PC-3 (cell line): ENCODE measurements at regions of chr2 and their contacts with region 1.

Region 1: DNA sequence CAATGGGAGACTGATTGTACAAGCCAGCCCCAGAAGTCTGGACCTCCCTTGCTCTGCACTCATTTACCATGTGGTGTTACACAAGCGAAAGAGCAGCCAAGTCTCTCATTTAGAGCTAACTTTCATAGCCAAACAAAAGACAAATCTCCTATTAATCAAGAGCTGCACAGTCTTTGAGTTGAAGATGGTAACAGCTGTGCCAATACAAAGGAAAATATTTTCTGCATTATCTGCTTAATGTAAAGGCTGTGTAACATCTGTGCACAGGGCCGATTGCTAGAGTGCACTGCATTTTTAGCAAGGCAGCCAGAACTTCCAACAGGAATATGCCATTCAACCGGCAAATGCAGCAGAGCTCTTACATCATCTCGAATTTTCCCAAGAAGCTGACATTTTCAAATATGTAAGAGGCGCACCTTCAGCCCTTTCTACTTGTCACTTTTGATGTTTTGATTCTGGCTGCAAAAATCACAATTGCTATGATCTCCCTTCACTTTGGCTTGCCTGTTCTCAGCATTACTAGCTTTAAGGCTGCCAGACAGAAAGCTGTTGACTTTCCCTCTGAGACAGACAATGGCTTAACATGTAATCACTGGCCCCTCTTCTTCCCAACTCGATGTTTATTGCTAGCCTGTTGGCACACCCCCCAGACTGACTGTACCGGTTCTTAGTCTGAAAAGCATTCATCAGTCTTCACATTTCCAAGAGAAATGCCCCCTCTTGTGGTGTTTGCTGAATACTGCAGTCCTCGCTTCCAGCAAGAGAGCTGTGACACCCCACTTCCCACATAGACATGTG is 96.9 kb upstream of the TANK start:
- DNase-seq: peak; percentile 93
- ATAC-seq: peak; percentile 86
- H3K4me3 ChIP-seq: no peak overlapping the region
- H3K27ac ChIP-seq: no peak overlapping the region
- H3K4me1 ChIP-seq: peaks cover 3% of the 10 kb centered on the region; the same call in 1 of the 2 replicates
- H3K27me3 ChIP-seq: no peaks in the 10 kb centered on the region
- CTCF ChIP-seq: peak; percentile 96

Region 2: GRCh38 chr2:160252278-160252887 is 811.0 kb before region 1 on chr2:
- CTCF ChIA-PET with region 1: interaction called, 4 read pairs
- POLR2A ChIA-PET with region 1: no interaction called
- intact Hi-C with region 1: loop called (anchors 10 kb)
- DNase-seq: peak; percentile 75
- ATAC-seq: peak; percentile 37; the same call in 1 of the 2 replicates
- H3K4me3 ChIP-seq: no peak overlapping the region
- H3K27ac ChIP-seq: no peak overlapping the region
- H3K4me1 ChIP-seq: peaks cover 17% of the 10 kb centered on the region
- H3K27me3 ChIP-seq: no peaks in the 10 kb centered on the region
- CTCF ChIP-seq: peak; percentile 82

Region 3: GRCh38 chr2:160719116-160719515 is 344.2 kb before region 1 on chr2:
- CTCF ChIA-PET with region 1: no interaction called
- POLR2A ChIA-PET with region 1: no interaction called
- intact Hi-C with region 1: no loop called
- DNase-seq: peak; percentile 83
- ATAC-seq: peak; percentile 93
- H3K4me3 ChIP-seq: no peak overlapping the region
- H3K27ac ChIP-seq: peak overlapping the region; percentile 9
- H3K4me1 ChIP-seq: peaks cover 21% of the 10 kb centered on the region
- H3K27me3 ChIP-seq: no peaks in the 10 kb centered on the region
- CTCF ChIP-seq: no peak

Region 4: DNA sequence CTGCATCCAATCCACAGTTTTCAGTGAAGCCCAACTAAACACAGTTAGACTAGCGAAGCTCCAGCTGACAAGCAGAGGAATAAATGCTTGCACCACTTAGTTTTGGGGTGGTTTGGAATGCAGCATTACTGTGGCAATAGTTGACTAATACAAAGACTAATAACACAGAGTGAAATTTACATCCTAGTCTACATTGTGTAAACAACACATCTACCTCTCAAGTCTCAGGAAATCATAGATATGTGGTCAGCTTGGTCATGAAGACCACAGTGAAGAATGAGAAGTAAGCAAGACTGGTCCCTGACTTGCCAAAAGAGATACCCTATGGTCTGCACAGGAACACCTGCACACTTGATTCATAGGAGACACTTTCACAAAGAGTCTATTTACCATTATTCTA is 58.2 kb before region 1 on chr2:
- CTCF ChIA-PET with region 1: interaction called, 7 read pairs
- POLR2A ChIA-PET with region 1: no interaction called
- intact Hi-C with region 1: loop called (anchors 5 kb)
- DNase-seq: peak; percentile 23
- ATAC-seq: peak; percentile 40
- H3K4me3 ChIP-seq: no peak overlapping the region
- H3K27ac ChIP-seq: no peak overlapping the region
- H3K4me1 ChIP-seq: 0 out of 2 replicates have a peak, but pooled peaks cover 3% of the 10 kb centered on the region
- H3K27me3 ChIP-seq: no peaks in the 10 kb centered on the region
- CTCF ChIP-seq: no peak

Region 5: GRCh38 chr2:161160226-161161069 is 97.1 kb after region 1 on chr2 and contains the start of gene TANK:
- CTCF ChIA-PET with region 1: no interaction called
- POLR2A ChIA-PET with region 1: no interaction called
- intact Hi-C with region 1: loop called (anchors 10 kb)
- DNase-seq: peak; percentile 92
- ATAC-seq: peak; percentile 93
- H3K4me3 ChIP-seq: peak within 1 kb of the TSS; percentile 87
- H3K27ac ChIP-seq: peak within 1 kb of the TSS; percentile 86
- H3K4me1 ChIP-seq: peaks cover 18% of the 10 kb centered on the region
- H3K27me3 ChIP-seq: no peaks in the 10 kb centered on the region
- CTCF ChIP-seq: no peak
- total RNA-seq, gene TANK: 22.2 and 23.7 TPM in 2 replicates

Region 6: GRCh38 chr2:161217597-161218185 is 154.3 kb after region 1 on chr2:
- CTCF ChIA-PET with region 1: no interaction called
- POLR2A ChIA-PET with region 1: no interaction called
- intact Hi-C with region 1: loop called (anchors 5 kb)
- DNase-seq: no peak
- ATAC-seq: peak; percentile 37
- H3K4me3 ChIP-seq: no peak overlapping the region
- H3K27ac ChIP-seq: no peak overlapping the region
- H3K4me1 ChIP-seq: no peaks in the 10 kb centered on the region
- H3K27me3 ChIP-seq: no peaks in the 10 kb centered on the region
- CTCF ChIP-seq: no peak

Region 7: DNA sequence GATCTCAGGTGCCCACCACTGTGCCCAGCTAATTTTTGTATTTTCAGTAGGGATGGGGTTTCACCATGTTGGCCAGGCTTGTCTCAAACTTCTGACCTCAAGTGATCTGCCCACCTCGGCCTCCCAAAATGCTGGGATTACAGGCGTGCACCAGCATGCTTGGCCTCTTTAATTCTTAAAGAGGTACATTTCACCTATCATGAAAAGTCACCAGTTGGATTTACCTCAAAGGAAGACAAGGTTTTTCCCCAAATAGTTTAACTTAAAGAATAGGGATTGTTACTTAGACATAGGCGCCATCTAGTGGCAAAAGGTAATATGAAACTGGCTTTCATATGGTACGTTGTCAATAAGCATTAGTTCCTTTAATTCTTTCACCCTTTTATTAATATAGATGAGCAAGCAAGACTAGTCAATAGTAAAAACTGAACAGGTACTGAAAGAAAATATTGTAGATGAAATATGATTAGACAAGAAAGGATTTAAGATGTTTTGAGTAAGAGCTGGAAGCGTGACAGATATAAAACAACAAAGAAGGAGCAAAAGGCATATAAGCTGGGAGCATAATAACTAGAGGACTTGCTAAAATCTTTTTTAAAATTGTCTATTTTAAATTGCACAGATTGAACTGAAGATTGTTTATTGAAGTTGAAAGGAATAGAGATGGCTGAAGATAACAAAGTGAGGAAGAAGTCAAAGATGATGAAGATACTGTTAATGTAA is 209.8 kb after region 1 on chr2:
- CTCF ChIA-PET with region 1: no interaction called
- POLR2A ChIA-PET with region 1: no interaction called
- intact Hi-C with region 1: loop called (anchors 5 kb)
- DNase-seq: peak; percentile 90
- ATAC-seq: peak; percentile 78
- H3K4me3 ChIP-seq: no peak overlapping the region
- H3K27ac ChIP-seq: no peak overlapping the region
- H3K4me1 ChIP-seq: no peaks in the 10 kb centered on the region
- H3K27me3 ChIP-seq: no peaks in the 10 kb centered on the region
- CTCF ChIP-seq: peak; percentile 83